Activated CD4-positive, alpha-beta T cell treated with anti-CD3 and anti-CD28 coated beads, Interleukin-2, amount 10 ng/mL, durations not matched to agents 24 days and 14 days (primary cell): ENCODE measurements at regions of chr5 and their contacts with region 1.

Region 1: DNA sequence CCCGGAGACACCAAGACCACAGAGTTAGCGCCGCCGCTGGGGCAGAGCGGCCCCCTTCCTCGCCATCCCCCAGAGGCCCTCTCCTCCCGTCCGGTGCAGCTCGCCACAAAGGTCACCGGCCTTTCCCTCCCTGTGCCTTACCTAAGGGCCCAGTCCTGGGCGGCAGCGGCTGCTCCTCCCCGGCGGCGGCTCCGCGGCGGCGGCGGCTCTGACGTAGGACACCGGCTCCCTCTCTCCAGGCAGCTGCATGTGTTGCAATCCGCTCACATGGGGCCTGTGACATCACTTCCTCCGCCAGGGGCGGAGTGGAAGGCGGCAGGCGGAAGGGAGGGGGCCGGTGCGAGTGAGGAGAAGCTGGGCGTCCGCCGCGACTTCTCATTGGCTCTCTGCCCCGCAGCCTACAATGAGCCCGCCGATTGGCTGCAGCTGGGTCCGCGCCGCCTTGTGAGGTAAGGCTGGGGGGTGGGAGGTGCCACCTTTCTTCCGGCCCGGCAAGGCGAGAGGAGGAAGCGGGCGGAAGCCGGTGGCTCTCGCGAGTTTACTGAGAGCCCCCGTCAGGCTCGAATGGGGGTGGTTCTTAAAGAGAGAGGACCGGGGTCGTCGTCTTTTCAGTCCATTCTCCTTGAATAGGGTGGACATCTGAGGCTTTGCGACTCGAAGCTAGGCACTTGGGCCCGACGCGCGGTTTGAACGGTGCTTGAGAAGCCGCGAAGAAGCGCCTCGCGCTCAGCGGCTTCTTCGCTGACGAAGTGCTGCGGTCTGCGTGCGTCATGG is at the start of gene ETF1:
- DNase-seq: peak; percentile 100
- H3K4me3 Mint-ChIP-seq: peak within 1 kb of the TSS; percentile 99
- H3K27ac Mint-ChIP-seq: peak within 1 kb of the TSS; percentile 100
- H3K4me1 Mint-ChIP-seq: peaks cover 49% of the 10 kb centered on the region
- H3K27me3 Mint-ChIP-seq: no peaks in the 10 kb centered on the region
- total RNA-seq, gene ETF1: 200 and 205 TPM in 2 replicates

Region 2: DNA sequence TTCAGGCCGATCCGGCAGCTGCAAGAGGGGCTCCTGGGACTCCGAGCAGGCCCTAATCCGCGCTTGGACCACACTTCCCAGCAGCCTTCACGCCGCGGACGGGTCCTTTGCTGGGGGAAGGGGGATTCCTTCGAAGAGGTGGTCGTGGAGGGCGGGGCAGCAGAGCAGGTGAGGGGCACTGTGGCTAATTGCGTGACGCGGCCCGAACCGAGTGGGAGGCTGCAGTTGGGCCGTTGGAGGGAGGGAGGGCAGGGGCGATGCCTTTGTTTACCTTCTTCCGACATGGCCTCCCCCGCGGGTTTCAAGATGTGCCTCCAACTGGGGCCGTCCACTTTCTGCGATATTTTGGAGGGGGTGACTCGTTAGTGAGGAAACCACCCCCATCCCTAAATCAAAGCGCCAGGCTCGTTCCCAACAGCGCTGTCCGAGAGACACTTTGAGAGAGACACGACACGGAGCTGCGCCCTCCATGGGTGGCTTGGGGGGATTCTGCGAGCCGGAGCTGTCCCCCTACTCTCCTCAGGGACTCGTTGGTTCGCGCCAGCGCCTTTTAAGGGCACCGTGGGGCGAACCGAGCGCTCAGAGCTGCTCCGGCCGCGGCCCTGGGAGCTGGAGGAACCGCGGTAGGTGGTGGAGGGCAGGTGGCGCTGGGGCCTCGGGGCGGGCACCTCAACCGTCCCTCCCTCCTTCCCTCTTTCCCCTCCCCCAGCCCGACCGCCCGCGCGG is 205.3 kb before region 1 on chr5 and contains the start of gene FAM53C:
- intact Hi-C with region 1: loop called (anchors 1 kb)
- DNase-seq: peak; percentile 98
- H3K4me3 Mint-ChIP-seq: peak within 1 kb of the TSS; percentile 80
- H3K27ac Mint-ChIP-seq: peak within 1 kb of the TSS; percentile 98
- H3K4me1 Mint-ChIP-seq: peaks cover 40% of the 10 kb centered on the region
- H3K27me3 Mint-ChIP-seq: no peaks in the 10 kb centered on the region
- total RNA-seq, gene FAM53C: 24.1 and 27.1 TPM in 2 replicates

Region 3: DNA sequence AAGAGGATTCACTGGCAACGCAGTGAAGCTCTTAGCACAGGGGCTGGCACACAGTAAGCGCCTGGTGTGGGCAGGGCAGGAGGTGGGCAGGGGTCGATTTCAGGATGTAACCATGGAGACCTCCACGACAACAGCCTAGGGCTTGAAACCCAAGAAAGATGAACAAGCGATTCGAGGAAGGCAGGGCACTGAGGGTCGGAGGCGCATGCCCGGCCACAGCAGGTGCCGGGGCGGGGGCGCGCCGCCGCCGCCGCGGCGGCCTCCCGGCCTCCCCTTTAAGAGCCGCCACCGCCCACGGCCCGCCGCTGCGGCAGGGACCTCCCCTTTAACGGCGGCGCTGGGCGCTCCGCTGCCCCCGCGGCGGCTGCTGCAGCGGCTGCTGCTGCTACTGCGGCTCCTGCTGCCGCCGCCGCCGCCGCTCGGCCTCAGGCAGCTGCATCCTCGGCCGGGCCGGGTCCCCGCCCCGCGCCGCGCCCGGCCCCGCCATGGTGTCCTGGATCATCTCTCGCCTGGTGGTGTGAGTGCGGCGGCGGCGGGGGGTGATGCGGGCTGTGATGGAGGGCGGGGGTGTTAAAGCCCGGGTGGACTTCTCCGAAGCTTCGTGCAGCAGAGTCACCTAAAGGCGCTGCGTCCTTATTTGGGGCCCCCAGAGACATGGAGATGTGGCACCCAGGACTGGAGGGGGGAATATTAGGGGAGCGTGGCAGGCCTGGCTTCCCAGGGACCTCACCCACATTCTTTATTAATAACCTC is 104.2 kb before region 1 on chr5 and contains the start of gene REEP2:
- intact Hi-C with region 1: loop called (anchors 1 kb)
- DNase-seq: peak; percentile 90
- H3K4me3 Mint-ChIP-seq: peak within 1 kb of the TSS; percentile 81
- H3K27ac Mint-ChIP-seq: peak within 1 kb of the TSS; percentile 76
- H3K4me1 Mint-ChIP-seq: peaks cover 12% of the 10 kb centered on the region
- H3K27me3 Mint-ChIP-seq: peaks cover 3% of the 10 kb centered on the region
- total RNA-seq, gene REEP2: 3.5 and 4.6 TPM in 2 replicates

Region 4: DNA sequence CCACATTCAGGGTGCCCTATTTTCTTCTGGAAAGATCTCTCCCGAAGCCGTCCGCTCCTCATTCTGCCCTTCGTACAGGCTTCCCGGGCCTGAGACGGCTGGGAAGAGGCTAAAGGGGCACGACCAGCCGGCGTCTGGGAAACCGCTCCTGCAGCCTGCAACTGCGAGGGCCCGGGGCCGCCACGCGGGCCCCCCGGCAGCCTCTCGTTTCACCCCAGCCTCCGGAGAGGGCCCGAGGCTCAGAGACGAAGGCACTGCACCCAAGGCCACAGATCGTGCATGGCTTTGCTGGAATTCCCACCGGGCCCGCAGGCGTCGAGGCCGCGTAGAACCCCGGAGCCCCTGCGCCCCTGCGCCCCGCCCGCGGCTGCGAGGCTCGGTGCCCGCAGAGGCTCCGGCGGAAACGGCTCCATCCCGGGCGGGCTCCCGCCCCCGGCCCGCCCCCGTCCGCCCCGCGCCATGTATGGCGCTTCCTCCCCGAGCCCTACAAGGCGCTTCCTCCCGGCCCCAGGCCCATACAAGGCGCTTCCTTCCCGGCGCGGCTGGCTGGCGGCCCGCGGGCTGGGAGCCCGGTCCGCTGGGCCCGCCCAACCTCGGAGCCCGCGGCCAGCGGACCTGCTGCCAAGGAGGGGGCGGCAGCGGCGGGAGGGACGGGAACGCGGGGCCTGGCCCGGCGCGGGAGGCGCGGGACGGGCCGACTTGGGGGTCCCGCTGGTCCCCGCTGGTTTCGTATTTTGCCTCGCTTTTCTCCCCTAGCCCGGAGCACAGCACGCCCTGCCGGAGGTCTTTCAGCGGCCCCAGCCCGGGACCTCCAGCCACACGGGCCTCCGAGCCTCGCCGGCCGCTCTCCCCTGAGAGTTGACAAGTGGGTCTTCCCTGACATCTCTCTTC is 51.2 kb before region 1 on chr5:
- intact Hi-C with region 1: loop called (anchors 2 kb)
- DNase-seq: peak; percentile 96
- H3K4me3 Mint-ChIP-seq: peak overlapping the region; percentile 90
- H3K27ac Mint-ChIP-seq: no peak overlapping the region
- H3K4me1 Mint-ChIP-seq: peaks cover 18% of the 10 kb centered on the region
- H3K27me3 Mint-ChIP-seq: peaks cover 30% of the 10 kb centered on the region

Region 5: GRCh38 chr5:138832218-138832617 is 289.1 kb after region 1 on chr5:
- intact Hi-C with region 1: no loop called
- DNase-seq: no peak
- H3K4me3 Mint-ChIP-seq: no peak overlapping the region
- H3K27ac Mint-ChIP-seq: no peak overlapping the region
- H3K4me1 Mint-ChIP-seq: peaks cover 12% of the 10 kb centered on the region
- H3K27me3 Mint-ChIP-seq: peaks cover 2% of the 10 kb centered on the region